ENCODE measurements at regions of chr11 and their contacts with region 1.

Region 1: DNA sequence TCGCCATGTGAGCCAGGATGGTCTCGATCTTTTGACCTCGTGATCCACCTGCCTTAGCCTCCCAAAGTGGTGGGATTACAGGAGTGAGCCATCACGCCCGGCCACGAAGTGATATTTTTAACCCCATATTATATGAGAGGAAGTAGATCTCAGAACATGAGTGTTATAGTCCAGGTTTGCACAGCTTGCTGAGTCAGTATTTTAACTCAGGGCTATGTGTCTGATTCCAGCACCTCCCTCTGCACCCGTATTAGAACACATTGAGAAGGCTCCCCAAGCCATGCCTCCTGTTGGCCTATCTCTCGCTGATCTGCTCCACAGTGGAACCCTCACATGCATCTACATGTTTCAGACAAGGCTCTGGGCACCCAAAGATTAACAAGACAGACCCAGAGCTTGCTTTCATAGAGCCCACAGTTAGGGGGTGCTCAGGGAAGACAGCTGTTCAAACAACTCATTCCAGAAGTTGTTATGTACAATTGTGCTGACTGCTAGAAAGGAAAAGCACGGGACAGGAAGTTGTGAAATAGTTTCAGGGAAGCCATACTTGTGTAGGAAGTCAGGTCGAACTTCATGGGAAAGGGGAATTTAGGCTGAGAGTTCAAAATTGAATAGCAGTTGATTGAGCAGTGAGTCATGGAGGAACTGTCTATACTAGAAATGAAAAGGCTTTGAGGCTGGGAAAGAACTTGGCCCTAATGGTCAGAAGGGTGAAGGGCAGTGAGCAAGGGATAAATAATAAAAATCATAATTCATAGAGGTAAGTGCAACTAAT is 49.3 kb upstream of the CLPB start:
- DNase-seq: no peak
- ATAC-seq: no peak
- H3K4me3 ChIP-seq: no peak overlapping the region
- H3K27ac ChIP-seq: no peak overlapping the region
- H3K4me1 ChIP-seq: peaks cover 0 to 6% of the 10 kb centered on the region in 2 experiments; a peak in 1 of 4 replicates
- H3K27me3 ChIP-seq: no peaks in the 10 kb centered on the region
- CTCF ChIP-seq: no peak
- POLR2A ChIP-seq: no peak
- RAD21 ChIP-seq: no peak

Region 2: GRCh38 chr11:71543866-71544265 is 939.7 kb before region 1 on chr11:
- CTCF ChIA-PET with region 1: no interaction called
- POLR2A ChIA-PET with region 1: no interaction called
- RAD21 ChIA-PET with region 1: no interaction called
- intact Hi-C with region 1: no loop called
- DNase-seq: no peak
- ATAC-seq: no peak
- H3K4me3 ChIP-seq: no peak overlapping the region
- H3K27ac ChIP-seq: no peak overlapping the region
- H3K4me1 ChIP-seq: peaks cover 0 to 11% of the 10 kb centered on the region in 2 experiments; a peak in 2 of 4 replicates
- H3K27me3 ChIP-seq: peaks cover 5% of the 10 kb centered on the region; the same call in 1 of the 2 replicates
- CTCF ChIP-seq: no peak
- POLR2A ChIP-seq: no peak
- RAD21 ChIP-seq: no peak

Region 3: DNA sequence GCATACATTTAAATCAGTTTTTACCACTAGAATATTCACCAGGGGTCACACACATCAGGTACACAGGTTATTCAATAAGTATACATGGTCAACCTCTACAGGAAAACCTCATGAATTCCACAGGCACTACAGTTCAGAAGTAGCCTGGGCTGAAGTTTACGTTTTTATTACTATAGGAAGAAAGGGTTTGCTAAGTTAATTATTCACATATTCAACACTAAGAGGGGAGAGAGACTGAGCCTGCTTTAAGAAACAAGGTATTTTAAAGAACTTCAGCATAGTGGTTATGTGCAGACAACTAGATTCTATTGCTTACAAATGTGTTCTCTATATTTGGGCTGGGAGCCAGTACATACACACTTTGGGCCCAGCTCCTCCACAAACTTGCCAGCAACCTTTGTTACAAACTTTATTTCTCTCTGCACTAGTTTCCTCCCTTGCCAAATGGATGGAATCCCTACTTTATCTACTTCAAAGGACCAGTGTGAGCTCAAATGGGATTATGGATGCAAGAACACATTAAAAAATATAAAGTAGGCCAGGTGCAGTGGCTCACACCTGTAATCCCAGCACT is 453.0 kb before region 1 on chr11:
- CTCF ChIA-PET with region 1: no interaction called
- POLR2A ChIA-PET with region 1: no interaction called
- RAD21 ChIA-PET with region 1: no interaction called
- intact Hi-C with region 1: no loop called
- DNase-seq: no peak
- ATAC-seq: no peak
- H3K4me3 ChIP-seq: no peak overlapping the region
- H3K27ac ChIP-seq: no peak overlapping the region
- H3K4me1 ChIP-seq: peaks cover 0 to 2% of the 10 kb centered on the region in 2 experiments; a peak in 1 of 4 replicates
- H3K27me3 ChIP-seq: no peaks in the 10 kb centered on the region
- CTCF ChIP-seq: no peak
- POLR2A ChIP-seq: no peak
- RAD21 ChIP-seq: no peak

Region 4: GRCh38 chr11:72573072-72573854 is 89.7 kb after region 1 on chr11:
- CTCF ChIA-PET with region 1: interaction called, 4 read pairs
- POLR2A ChIA-PET with region 1: no interaction called
- RAD21 ChIA-PET with region 1: no interaction called
- intact Hi-C with region 1: loop called (anchors 1 kb)
- DNase-seq: peak; percentile 23
- ATAC-seq: peak; percentile 97
- H3K4me3 ChIP-seq: no peak overlapping the region
- H3K27ac ChIP-seq: no peak overlapping the region
- H3K4me1 ChIP-seq: peaks cover 0 to 9% of the 10 kb centered on the region in 2 experiments; a peak in 2 of 4 replicates
- H3K27me3 ChIP-seq: no peaks in the 10 kb centered on the region
- CTCF ChIP-seq: peak; percentile 45 to 72 (median 66)
- POLR2A ChIP-seq: no peak
- RAD21 ChIP-seq: peak; percentile 74

Region 5: GRCh38 chr11:72642884-72643511 is 159.4 kb after region 1 on chr11:
- CTCF ChIA-PET with region 1: no interaction called
- POLR2A ChIA-PET with region 1: no interaction called
- RAD21 ChIA-PET with region 1: no interaction called
- intact Hi-C with region 1: loop called (anchors 2 kb)
- DNase-seq: peak; percentile 32
- ATAC-seq: peak; percentile 80
- H3K4me3 ChIP-seq: peak overlapping the region; percentile 44 to 59
- H3K27ac ChIP-seq: no peak overlapping the region; the same call in 1 of the 2 replicates
- H3K4me1 ChIP-seq: peaks cover 4 to 22% of the 10 kb centered on the region in 2 experiments; a peak in 3 of 4 replicates
- H3K27me3 ChIP-seq: peaks cover 13% of the 10 kb centered on the region; the same call in 1 of the 2 replicates
- CTCF ChIP-seq: peak; percentile 74 to 86 (median 78)
- POLR2A ChIP-seq: no peak
- RAD21 ChIP-seq: peak; percentile 86